CD4-positive, alpha-beta memory T cell (primary cell): ENCODE measurements at regions of chrX and their contacts with region 1.

Region 1: GRCh38 chrX:38052096-38052495 is 45.7 kb downstream of the SYTL5 start:
- DNase-seq: no peak
- H3K4me3 ChIP-seq: no peak overlapping the region
- H3K4me3 Mint-ChIP-seq: no peak overlapping the region
- H3K27ac ChIP-seq: no peak overlapping the region
- H3K27ac Mint-ChIP-seq: no peak overlapping the region
- H3K4me1 ChIP-seq: no peaks in the 10 kb centered on the region
- H3K4me1 Mint-ChIP-seq: no peaks in the 10 kb centered on the region
- H3K27me3 ChIP-seq: no peaks in the 10 kb centered on the region
- H3K27me3 Mint-ChIP-seq: no peaks in the 10 kb centered on the region

Region 2: DNA sequence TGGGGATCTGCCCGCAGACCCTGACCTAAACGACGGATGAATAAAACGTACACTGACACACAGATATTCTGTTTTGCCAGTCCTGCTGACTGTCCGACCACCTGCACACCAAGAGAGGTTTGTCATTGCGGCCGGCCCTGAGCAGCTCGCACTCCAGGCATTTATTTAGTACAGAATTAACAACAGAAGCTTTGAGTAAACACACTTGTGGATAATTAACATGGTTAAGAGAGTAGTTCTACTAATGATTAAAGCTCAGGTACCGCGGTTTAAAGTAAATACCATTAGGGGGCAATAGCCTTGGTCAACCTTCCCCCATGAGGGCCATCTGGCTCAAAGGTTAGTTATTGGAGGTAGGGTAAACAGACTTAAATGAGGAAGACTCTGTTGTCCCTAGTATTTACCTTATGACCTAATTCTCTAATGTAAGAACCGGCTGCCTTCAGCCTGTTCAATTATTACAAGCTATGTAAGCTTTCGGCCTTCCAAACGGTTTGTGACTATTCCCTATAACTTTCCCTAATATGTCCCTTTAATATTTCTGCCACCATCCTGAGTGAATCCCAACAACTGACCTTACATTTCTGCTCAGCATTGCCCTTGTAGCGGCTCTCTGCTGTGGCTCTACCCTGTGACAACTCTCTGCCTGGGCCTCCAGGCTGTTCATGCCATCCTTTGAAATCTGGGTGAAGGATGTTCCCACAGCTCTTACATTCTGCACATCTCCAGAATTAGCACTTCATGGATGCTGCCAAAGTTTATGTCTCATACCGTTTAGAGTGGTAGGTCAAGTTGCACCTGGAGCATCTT is 92.7 kb before region 1 on chrX:
- CTCF ChIA-PET with region 1: no interaction called
- POLR2A ChIA-PET with region 1: no interaction called
- intact Hi-C with region 1: loop called (anchors 5 kb)
- DNase-seq: no peak
- H3K4me3 ChIP-seq: no peak overlapping the region
- H3K4me3 Mint-ChIP-seq: no peak overlapping the region
- H3K27ac ChIP-seq: no peak overlapping the region
- H3K27ac Mint-ChIP-seq: no peak overlapping the region
- H3K4me1 ChIP-seq: no peaks in the 10 kb centered on the region
- H3K4me1 Mint-ChIP-seq: peaks cover 0 to 3% (median 0%) of the 10 kb centered on the region in 4 donors
- H3K27me3 ChIP-seq: no peaks in the 10 kb centered on the region
- H3K27me3 Mint-ChIP-seq: peaks cover 0 to 2% of the 10 kb centered on the region in 2 donors